ENCODE measurements at regions of chr19 and their contacts with region 1.

Region 1: DNA sequence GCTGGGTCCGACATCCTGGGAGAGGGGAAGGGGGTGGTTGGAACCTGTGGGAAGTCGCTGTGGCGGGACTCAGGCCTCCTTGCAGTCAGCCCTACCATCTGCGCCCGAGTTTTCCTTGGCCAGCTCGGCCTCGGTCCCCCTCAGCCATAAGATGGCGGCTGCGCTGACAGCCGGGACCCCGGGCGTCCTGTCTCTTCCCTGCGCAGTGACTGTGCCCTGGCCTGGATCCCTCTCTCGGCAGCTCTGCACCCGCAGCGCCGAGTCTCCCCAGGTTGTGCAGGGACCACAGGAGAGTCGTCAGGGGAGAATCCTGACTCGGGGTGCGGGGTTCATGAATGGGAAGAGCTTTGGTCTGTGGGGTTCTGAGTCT is 345 bp downstream of the ZNF257 start:
- DNase-seq: peak in 8 of 14 experiments; percentile 3 to 33 (median 15)
- ATAC-seq: peak; percentile 43
- H3K4me3 ChIP-seq: peak overlapping the region; percentile 70
- H3K4me3 Mint-ChIP-seq: peak overlapping the region; percentile 97
- H3K27ac ChIP-seq: no peak overlapping the region
- H3K27ac Mint-ChIP-seq: peak overlapping the region; percentile 90
- H3K4me1 ChIP-seq: peaks cover 7% of the 10 kb centered on the region
- H3K4me1 Mint-ChIP-seq: peaks cover 13% of the 10 kb centered on the region
- H3K27me3 ChIP-seq: no peaks in the 10 kb centered on the region
- H3K27me3 Mint-ChIP-seq: no peaks in the 10 kb centered on the region
- CTCF ChIP-seq: no peak

Region 2: DNA sequence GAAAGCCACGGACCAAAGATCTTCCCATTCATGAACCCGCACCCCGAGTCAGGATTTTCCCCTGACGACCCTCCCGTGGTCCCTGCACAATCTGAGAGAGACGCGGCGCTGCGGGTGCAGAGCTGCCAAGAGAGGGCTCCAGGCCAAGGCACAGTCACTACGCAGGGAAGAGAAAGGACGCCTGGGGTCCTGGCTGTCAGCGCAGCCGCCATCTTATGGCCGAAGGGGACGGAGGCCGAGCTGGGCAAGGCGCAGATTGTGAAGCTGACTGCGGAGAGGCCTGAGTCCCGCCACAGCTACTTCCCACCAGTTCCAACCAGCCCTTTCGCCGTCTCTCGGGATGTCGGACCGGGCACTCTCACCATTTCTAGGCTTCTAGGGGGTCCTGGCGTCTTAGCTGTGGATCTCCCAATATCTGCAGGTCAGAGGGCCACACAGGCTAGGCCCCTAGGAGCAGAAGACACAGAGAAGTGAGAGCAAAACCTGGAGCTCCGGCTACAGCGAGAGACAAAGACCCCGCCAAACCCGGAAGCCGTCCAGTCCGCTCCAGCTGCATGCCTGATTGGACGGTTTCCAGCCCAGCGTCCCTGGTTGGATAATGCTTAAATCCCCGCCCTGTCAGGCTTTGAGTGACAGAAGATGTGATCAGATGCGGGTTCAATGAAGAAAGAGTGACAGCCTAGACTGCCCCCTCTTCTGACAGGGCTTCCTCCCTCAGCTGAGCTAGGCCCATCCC is 285.4 kb before region 1 on chr19 and contains the start of gene ZNF100:
- CTCF ChIA-PET with region 1: no interaction called
- POLR2A ChIA-PET with region 1: interaction called, 13 read pairs
- intact Hi-C with region 1: loop called in 1 of 2 experiments (anchors 2 kb)
- DNase-seq: peak; percentile 73 to 92 (median 82)
- ATAC-seq: peak; percentile 98
- H3K4me3 ChIP-seq: peak within 1 kb of the TSS; percentile 94
- H3K4me3 Mint-ChIP-seq: peak within 1 kb of the TSS; percentile 95
- H3K27ac ChIP-seq: peak within 1 kb of the TSS; percentile 44 to 52
- H3K27ac Mint-ChIP-seq: peak within 1 kb of the TSS; percentile 87
- H3K4me1 ChIP-seq: peaks cover 13% of the 10 kb centered on the region
- H3K4me1 Mint-ChIP-seq: peaks cover 45% of the 10 kb centered on the region
- H3K27me3 ChIP-seq: no peaks in the 10 kb centered on the region
- H3K27me3 Mint-ChIP-seq: no peaks in the 10 kb centered on the region
- CTCF ChIP-seq: no peak
- total RNA-seq, gene ZNF100: 10.8 to 11.0 TPM

Region 3: DNA sequence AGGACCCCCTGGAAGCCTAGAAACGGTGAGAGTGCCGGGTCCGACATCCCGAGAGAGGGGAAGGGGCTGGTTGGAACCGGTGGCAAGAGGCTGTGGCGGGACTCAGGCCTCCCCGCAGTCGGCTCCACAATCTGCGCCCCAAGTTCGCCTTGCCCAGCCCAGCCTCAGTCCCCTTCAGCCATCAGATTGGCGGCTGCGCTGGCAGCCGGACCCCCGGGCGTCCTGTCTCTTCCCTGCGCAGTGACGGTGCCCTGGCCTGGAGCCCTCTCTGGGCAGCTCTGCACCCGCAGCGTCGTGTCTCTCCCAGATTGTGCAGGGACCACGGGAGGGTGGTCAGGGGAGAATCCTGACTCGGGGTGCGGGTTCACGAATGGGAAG is 581.8 kb after region 1 on chr19:
- CTCF ChIA-PET with region 1: no interaction called
- POLR2A ChIA-PET with region 1: interaction called, 4 read pairs
- intact Hi-C with region 1: loop called in 1 of 2 experiments (anchors 10 kb)
- DNase-seq: no peak
- ATAC-seq: peak; percentile 16
- H3K4me3 ChIP-seq: peak overlapping the region; percentile 65
- H3K4me3 Mint-ChIP-seq: peak overlapping the region; percentile 96
- H3K27ac ChIP-seq: no peak overlapping the region
- H3K27ac Mint-ChIP-seq: peak overlapping the region; percentile 83
- H3K4me1 ChIP-seq: no peaks in the 10 kb centered on the region
- H3K4me1 Mint-ChIP-seq: peaks cover 16% of the 10 kb centered on the region
- H3K27me3 ChIP-seq: peaks cover 0 to 2% of the 10 kb centered on the region in 2 experiments
- H3K27me3 Mint-ChIP-seq: no peaks in the 10 kb centered on the region
- CTCF ChIP-seq: no peak

Measured in CD4-positive, alpha-beta T cell (primary cell).